Prostate gland (tissue), 2 donors: ENCODE measurements at regions of chr9 and their contacts with region 1.

Region 1: DNA sequence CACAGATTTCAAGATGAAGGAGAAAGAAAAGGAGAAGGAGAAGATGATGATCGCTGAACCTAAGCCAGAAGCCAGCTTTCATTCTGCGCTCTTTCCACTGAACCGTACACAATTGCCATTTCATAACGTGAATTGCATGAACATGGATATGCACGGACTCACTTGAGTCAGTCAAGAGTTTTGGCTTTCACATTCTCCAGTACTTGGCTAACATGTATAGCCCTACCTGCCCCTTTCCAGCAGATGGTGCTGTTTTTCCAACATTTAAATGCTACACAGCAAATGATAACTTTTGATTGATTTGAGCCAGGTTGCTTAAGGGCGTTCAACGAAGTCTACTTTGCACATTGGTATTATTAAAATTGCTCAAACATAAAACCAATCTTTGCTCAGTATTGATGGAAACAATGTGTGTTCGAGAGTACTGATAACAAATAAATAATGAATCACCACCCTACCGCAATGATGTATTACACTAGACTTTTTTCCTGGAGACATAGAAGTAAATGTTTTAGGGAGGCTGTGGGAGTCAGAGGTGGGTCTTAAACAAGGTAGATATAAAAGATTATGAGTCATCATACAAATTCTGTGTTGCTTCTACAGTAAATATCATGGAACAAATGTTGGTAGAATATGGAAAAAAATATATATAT is 196.4 kb downstream of the TRPM3 start:
- DNase-seq: peak; percentile 45
- H3K4me3 ChIP-seq: peak overlapping the region in 1 of 2 donors; percentile 9
- H3K27ac ChIP-seq: peak overlapping the region in 1 of 2 donors; percentile 31
- H3K4me1 ChIP-seq: no peaks in the 10 kb centered on the region
- H3K27me3 ChIP-seq: no peaks in the 10 kb centered on the region
- CTCF ChIP-seq: peak; percentile 47 to 85 (median 76)
- POLR2A ChIP-seq: no peak

Region 2: GRCh38 chr9:70639853-70640814 is 284.9 kb before region 1 on chr9:
- intact Hi-C with region 1: loop called (anchors 5 kb)
- DNase-seq: peak; percentile 30
- H3K4me3 ChIP-seq: no peak overlapping the region
- H3K27ac ChIP-seq: no peak overlapping the region
- H3K4me1 ChIP-seq: no peaks in the 10 kb centered on the region
- H3K27me3 ChIP-seq: no peaks in the 10 kb centered on the region
- CTCF ChIP-seq: peak; percentile 21 to 80 (median 68)
- POLR2A ChIP-seq: no peak

Region 3: DNA sequence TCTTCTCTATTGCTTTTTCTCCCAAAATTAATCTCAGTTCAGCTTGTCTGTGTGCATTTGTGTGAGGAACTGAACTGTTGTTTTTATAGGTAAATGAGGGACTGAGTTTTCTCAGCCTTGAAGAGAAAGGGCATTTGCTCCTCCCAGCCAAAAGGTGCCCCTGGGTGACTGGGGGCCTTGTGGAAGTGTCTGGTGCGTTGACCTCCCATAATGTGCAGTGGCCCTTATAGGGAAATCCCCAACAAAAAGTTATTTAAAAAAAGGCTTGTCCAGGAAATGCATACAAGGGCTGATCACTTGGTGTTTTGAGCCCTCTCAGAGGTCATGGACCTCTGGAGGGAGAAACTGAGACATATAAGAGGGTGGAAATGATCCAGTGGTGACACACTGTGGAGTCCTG is 270.9 kb before region 1 on chr9:
- intact Hi-C with region 1: no loop called
- DNase-seq: no peak
- H3K4me3 ChIP-seq: no peak overlapping the region
- H3K27ac ChIP-seq: no peak overlapping the region
- H3K4me1 ChIP-seq: no peaks in the 10 kb centered on the region
- H3K27me3 ChIP-seq: no peaks in the 10 kb centered on the region
- CTCF ChIP-seq: no peak
- POLR2A ChIP-seq: no peak

Region 4: GRCh38 chr9:70784456-70784855 is 140.6 kb before region 1 on chr9:
- intact Hi-C with region 1: no loop called
- DNase-seq: no peak
- H3K4me3 ChIP-seq: no peak overlapping the region
- H3K27ac ChIP-seq: no peak overlapping the region
- H3K4me1 ChIP-seq: no peaks in the 10 kb centered on the region
- H3K27me3 ChIP-seq: no peaks in the 10 kb centered on the region
- CTCF ChIP-seq: no peak
- POLR2A ChIP-seq: no peak

Region 5: GRCh38 chr9:71001780-71002386 is 76.9 kb after region 1 on chr9:
- intact Hi-C with region 1: loop called (anchors 5 kb)
- DNase-seq: peak; percentile 29
- H3K4me3 ChIP-seq: no peak overlapping the region
- H3K27ac ChIP-seq: no peak overlapping the region
- H3K4me1 ChIP-seq: no peaks in the 10 kb centered on the region
- H3K27me3 ChIP-seq: no peaks in the 10 kb centered on the region
- CTCF ChIP-seq: peak in 3 of 4 experiments; percentile 63 to 73 (median 69)
- POLR2A ChIP-seq: no peak

Region 6: GRCh38 chr9:71079451-71079850 is 154.4 kb after region 1 on chr9:
- intact Hi-C with region 1: no loop called
- DNase-seq: no peak
- H3K4me3 ChIP-seq: no peak overlapping the region
- H3K27ac ChIP-seq: no peak overlapping the region
- H3K4me1 ChIP-seq: no peaks in the 10 kb centered on the region
- H3K27me3 ChIP-seq: no peaks in the 10 kb centered on the region
- CTCF ChIP-seq: no peak
- POLR2A ChIP-seq: no peak

Region 7: DNA sequence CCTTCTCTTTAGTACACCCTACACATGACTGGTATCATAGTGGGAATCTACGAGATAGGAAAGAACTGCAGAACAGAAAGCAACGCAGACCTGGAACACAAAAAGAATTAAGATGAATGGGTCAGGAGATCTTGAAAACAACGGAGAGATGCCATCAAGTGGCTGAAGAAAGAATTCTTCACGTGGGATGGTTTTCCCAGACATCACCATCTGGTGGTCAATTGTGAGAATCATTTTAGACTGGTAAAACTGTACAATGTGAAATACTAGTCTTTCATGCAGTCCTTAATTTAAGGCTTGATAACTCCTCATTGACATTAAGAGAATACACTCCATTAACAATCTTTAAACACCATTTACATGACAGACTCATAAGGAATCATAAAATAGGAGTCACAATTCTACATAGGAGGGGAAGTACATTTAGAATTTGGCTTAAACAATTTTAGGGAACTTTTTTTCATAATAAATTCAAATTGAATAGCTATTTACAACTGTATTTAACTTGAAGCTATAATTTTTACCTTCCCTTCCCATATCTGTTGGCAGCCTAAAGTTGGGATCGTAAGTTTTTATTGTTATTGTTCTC is 324.8 kb after region 1 on chr9:
- intact Hi-C with region 1: loop called (anchors 2 kb)
- DNase-seq: peak; percentile 31
- H3K4me3 ChIP-seq: no peak overlapping the region
- H3K27ac ChIP-seq: no peak overlapping the region
- H3K4me1 ChIP-seq: no peaks in the 10 kb centered on the region
- H3K27me3 ChIP-seq: no peaks in the 10 kb centered on the region
- CTCF ChIP-seq: peak; percentile 67 to 84 (median 78)
- POLR2A ChIP-seq: no peak